ENCODE measurements at regions of chr18 and their contacts with region 1.

Region 1: GRCh38 chr18:75376004-75376403 is 51.5 kb downstream of the SMIM21 start:
- DNase-seq: no peak
- H3K4me3 ChIP-seq: no peak overlapping the region
- H3K27ac ChIP-seq: no peak overlapping the region
- H3K4me1 ChIP-seq: no peaks in the 10 kb centered on the region
- H3K27me3 ChIP-seq: no peaks in the 10 kb centered on the region
- CTCF ChIP-seq: no peak
- EP300 ChIP-seq: no peak
- POLR2A ChIP-seq: no peak

Region 2: DNA sequence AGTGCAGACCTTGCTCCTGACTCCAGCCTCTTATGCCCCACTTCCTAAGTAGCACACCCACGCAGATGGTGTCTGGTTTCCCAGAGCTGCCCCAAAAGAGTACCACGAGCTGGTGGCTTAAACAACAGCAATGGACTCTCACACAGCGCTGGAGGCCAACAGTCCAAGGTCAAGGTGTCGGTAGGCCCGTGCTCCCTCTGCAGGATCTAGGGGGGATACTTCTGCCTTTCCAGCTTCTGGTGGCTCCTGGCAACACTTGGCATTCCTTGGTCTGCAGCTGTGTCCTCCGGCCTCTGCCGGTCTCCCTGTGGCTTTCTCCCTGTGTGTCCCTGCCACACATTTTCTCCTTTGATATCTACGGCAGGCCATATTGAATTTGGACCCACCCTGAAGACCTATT is 66.4 kb before region 1 on chr18:
- intact Hi-C with region 1: loop called in 1 of 4 experiments (anchors 10 kb)
- DNase-seq: no peak
- H3K4me3 ChIP-seq: no peak overlapping the region
- H3K27ac ChIP-seq: no peak overlapping the region
- H3K4me1 ChIP-seq: no peaks in the 10 kb centered on the region
- H3K27me3 ChIP-seq: no peaks in the 10 kb centered on the region
- CTCF ChIP-seq: no peak
- EP300 ChIP-seq: no peak
- POLR2A ChIP-seq: no peak

Region 3: DNA sequence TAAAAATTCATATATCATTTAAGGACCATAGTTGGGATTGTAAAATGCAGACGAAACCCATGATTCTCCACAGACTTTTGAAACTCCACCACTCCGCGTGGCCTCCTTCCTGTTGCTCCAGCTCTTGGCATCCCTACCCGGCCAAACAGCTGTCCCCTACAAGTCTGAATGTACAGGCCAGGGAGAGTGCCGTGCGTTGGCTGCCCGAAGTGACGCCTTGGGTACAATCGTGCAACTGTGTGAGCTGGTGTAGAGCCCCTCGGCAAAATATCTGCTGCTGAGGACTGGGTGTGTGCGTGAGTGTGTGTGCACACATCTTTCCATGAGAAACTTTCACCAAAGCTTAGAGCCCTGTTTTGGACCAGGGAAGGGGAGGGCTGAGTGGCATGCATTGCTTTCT is 1162.8 kb after region 1 on chr18:
- intact Hi-C with region 1: no loop called
- DNase-seq: peak in 1 of 5 donors; percentile 3
- H3K4me3 ChIP-seq: no peak overlapping the region
- H3K27ac ChIP-seq: no peak overlapping the region
- H3K4me1 ChIP-seq: no peaks in the 10 kb centered on the region
- H3K27me3 ChIP-seq: no peaks in the 10 kb centered on the region
- CTCF ChIP-seq: no peak
- EP300 ChIP-seq: no peak
- POLR2A ChIP-seq: no peak

Measured in ovary (tissue), 10 donors.